ENCODE measurements at regions of chr19 and their contacts with region 1.

Region 1: GRCh38 chr19:23969630-23970029 is 54.9 kb downstream of the ZNF726 start:
- DNase-seq: no peak
- ATAC-seq: no peak

Region 2: GRCh38 chr19:23872282-23872919 is 97.2 kb before region 1 on chr19:
- intact Hi-C with region 1: loop called in 1 of 2 experiments (anchors 5 kb)
- DNase-seq: no peak
- ATAC-seq: no peak